Esophagus squamous epithelium (tissue), 5 donors: ENCODE measurements at regions of chr7 and their contacts with region 1.

Region 1: DNA sequence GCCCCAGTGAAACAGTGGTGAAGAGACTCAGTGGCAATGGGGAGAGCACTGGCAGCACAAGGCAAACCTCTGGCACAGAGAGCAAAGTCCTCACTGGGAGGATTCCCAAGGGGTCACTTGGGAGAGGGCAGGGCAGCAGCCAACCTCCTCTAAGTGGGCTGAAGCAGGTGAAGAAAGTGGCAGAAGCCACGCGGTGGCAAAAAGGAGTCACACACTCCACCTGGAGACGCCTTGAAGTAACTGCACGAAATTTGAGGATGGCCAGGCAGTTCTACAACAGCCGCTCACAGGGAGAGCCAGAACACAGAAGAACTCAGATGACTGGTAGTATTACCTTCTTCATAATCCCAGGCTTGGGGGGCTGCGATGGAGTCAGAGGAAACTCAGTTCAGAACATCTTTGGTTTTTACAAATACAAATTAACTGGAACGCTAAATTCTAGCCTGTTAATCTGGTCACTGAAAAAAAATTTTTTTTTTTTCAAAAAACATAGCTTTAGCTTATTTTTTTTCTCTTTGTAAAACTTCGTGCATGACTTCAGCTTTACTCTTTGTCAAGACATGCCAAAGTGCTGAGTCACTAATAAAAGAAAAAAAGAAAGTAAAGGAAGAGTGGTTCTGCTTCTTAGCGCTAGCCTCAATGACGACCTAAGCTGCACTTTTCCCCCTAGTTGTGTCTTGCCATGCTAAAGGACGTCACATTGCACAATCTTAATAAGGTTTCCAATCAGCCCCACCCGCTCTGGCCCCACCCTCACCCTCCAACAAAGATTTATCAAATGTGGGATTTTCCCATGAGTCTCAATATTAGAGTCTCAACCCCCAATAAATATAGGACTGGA is 435 bp upstream of the IL6 start:
- DNase-seq: no peak
- H3K4me3 ChIP-seq: peak overlapping the region; percentile 0 to 62 (median 34)
- H3K27ac ChIP-seq: peak overlapping the region; percentile 44 to 89 (median 73)
- H3K4me1 ChIP-seq: peaks cover 9 to 54% (median 19%) of the 10 kb centered on the region in 3 donors
- H3K27me3 ChIP-seq: no peaks in the 10 kb centered on the region
- CTCF ChIP-seq: peak; percentile 23 to 71 (median 46)
- POLR2A ChIP-seq: no peak

Region 2: DNA sequence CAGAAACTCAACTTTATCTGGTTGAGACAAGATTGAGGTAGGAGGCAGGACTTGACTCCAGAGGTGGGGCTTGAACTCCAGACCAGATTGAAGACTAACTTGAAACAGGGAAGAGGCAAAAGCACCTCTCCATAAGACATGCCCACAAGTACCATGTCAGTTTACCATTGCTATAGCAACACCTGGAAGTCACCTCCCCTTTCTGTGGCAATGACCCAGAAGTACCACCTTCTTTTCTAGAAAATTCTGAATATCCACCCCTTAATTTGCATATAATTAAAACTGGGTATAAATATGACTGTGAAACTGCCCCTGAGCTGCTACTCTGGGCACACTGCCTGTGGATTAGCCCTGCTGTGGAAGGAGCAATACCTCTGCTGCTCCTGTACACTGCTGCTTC is 101.0 kb after region 1 on chr7:
- intact Hi-C with region 1: no loop called
- DNase-seq: no peak
- H3K4me3 ChIP-seq: no peak overlapping the region
- H3K27ac ChIP-seq: no peak overlapping the region
- H3K4me1 ChIP-seq: peaks cover 0 to 7% (median 6%) of the 10 kb centered on the region in 3 donors
- H3K27me3 ChIP-seq: peaks cover 0 to 12% (median 0%) of the 10 kb centered on the region in 4 donors
- CTCF ChIP-seq: no peak
- POLR2A ChIP-seq: no peak

Region 3: DNA sequence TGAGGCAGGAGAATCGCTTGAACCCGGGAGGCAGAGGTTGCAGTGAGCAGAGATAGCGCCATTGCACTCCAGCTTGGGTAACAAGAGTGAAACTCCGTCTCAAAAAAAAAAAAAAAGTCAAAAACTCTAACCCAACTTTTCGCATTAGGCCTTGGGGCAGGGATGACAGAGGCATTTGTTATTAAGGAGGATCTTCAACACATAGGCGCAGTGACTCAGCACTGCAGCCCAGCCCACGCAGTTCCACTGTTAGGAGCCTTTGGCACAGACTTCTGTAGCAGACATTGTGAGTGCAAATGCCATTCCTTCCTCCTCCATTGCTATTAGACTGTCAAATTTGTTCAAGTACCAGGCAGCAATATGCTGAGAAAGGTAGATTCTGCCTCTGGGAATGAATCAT is 335.9 kb after region 1 on chr7:
- intact Hi-C with region 1: loop called (anchors 10 kb)
- DNase-seq: no peak
- H3K4me3 ChIP-seq: no peak overlapping the region
- H3K27ac ChIP-seq: no peak overlapping the region
- H3K4me1 ChIP-seq: peaks cover 0 to 8% (median 0%) of the 10 kb centered on the region in 3 donors
- H3K27me3 ChIP-seq: no peaks in the 10 kb centered on the region
- CTCF ChIP-seq: no peak
- POLR2A ChIP-seq: no peak